ENCODE measurements at regions of chr2 and their contacts with region 1.

Region 1: DNA sequence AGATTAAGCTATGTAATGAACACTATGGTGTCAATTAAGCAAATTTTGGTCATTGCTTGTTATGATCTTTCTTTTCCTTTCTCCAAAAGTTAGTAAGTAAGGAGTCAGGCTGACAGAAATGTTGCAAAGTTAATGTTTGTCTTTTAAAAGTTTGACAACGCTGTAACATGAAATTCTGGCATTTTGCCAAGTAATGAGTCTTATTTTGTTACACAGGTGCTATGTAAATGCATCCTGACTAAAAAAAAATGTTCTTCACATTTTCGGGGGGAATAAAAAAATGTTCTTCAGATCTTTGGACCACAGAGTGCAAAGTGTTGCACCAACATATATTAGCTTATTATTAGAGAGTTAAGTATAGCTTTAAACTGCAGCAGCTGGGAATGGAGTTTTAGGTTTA is 54.8 kb upstream of the PROKR1 start:
- DNase-seq: no peak
- H3K4me3 ChIP-seq: no peak overlapping the region
- H3K27me3 ChIP-seq: no peaks in the 10 kb centered on the region
- CTCF ChIP-seq: no peak

Region 2: GRCh38 chr2:68548396-68548795 is 40.2 kb before region 1 on chr2:
- CTCF ChIA-PET with region 1: no interaction called
- POLR2A ChIA-PET with region 1: interaction called, 16 read pairs
- DNase-seq: no peak
- H3K4me3 ChIP-seq: no peak overlapping the region
- H3K27me3 ChIP-seq: no peaks in the 10 kb centered on the region
- CTCF ChIP-seq: no peak

Region 3: DNA sequence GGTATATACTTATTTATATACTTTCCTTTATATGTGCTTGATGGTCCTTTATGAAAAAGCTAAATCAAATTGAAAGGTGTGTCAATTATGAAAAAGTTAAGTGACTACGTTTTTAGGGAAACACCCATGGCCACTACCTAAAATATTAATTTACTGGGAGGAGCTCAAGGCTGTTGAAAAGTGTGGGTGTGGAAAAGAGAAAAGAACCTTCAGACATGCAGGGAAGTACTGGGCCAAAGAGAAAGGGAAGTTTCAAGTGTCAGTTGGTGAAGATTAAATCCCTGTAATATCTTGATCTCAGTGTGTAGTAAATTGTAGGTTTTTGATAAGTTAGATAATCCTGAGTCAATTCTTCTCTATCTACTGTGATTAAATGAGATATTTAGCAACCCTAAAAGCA is 379.6 kb after region 1 on chr2:
- CTCF ChIA-PET with region 1: no interaction called
- POLR2A ChIA-PET with region 1: no interaction called
- DNase-seq: no peak
- H3K4me3 ChIP-seq: no peak overlapping the region
- H3K27me3 ChIP-seq: no peaks in the 10 kb centered on the region
- CTCF ChIP-seq: no peak